ENCODE measurements at regions of chr19 and their contacts with region 1.

Region 1: DNA sequence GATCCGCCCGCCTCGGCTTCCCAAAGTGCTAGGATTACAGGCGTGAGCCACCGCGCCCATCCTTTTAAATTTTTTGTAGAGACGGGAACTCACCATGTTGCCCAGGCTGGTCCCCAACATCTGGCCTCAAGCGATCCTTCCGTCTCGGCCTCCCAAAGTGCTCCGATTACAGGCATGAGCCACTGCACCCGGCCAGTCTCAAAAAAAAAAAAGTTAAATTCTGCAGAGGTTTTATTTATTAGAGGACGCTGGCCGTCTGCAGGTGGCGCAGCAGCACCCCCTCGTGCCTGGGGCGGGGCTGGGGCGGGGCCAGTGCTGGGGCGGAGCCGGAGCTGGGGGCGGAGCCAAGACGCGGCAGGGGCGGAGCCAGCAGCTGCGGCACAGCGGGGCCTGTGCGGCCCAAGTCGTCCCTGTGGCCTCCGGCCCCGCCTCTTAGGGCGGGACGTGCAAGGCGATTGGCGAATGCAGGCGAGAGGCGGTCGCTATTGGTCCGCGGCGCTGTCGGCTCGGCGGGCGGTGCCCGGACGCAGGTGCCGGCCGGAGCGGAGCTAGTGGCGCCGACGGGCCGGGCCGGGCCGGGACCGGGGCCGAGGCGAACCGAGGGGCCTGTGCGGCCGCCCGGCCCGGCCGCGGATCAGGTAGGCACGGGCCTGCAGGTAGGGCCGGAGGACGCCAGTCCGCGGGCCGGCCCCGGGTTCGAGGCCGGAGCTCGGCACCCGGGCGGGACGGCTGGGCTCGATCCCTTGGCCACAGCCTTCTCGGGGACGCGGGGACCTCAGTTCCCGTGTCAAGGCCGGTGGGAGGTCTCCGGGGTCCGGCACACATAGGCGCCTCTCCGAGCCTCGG is at the start of gene MARCHF2:
- DNase-seq: peak; percentile 99
- H3K4me3 ChIP-seq: peak within 1 kb of the TSS; percentile 86
- H3K27ac ChIP-seq: no peak within 1 kb of the TSS
- H3K4me1 ChIP-seq: peaks cover 6% of the 10 kb centered on the region
- CTCF ChIP-seq: peak; percentile 74
- total RNA-seq, gene MARCHF2: 8.1 and 14.1 TPM in 2 replicates

Region 2: DNA sequence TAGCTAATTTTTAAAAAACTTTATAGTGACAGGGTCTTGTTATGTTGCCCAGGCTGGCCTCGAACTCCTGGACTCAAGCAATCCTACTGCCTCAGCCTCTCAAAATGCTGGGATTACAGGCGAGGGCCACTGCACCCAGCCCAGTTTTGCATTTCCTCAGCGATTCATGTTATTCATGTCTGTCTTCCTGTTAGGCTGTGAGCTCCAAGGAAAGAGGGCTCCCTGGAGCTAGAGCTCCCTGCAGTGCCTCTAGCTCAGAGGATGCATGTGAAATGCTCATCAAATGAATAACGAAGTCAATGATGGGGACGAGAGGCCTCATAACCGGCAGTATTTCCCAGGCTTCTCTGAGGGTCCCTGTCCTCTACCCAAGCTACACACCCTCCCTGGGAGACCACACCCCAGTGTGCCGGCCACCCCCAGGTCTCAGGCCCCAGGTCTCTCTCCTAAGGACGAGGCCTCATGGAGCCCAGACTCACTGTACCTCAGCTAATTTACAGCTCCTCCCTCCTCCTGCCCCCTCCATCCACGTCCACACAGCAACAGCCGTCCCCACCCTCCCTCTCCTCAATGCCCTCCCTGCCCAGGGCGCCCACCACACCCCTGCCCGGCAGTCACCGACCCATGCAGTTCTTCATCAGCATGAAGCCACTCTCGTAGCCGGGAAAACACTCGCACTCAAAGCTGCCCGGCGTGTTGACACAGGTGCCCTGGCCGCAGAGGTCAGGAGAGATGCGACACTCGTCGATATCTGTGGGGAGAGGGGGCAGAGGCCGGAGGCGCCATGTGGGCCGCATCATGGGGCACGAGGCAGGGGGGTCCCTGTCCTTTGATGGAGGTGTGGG is 292.1 kb before region 1 on chr19:
- CTCF ChIA-PET with region 1: no interaction called
- POLR2A ChIA-PET with region 1: no interaction called
- intact Hi-C with region 1: no loop called
- DNase-seq: no peak
- H3K4me3 ChIP-seq: no peak overlapping the region
- H3K27ac ChIP-seq: no peak overlapping the region
- H3K4me1 ChIP-seq: no peaks in the 10 kb centered on the region
- CTCF ChIP-seq: no peak

Region 3: DNA sequence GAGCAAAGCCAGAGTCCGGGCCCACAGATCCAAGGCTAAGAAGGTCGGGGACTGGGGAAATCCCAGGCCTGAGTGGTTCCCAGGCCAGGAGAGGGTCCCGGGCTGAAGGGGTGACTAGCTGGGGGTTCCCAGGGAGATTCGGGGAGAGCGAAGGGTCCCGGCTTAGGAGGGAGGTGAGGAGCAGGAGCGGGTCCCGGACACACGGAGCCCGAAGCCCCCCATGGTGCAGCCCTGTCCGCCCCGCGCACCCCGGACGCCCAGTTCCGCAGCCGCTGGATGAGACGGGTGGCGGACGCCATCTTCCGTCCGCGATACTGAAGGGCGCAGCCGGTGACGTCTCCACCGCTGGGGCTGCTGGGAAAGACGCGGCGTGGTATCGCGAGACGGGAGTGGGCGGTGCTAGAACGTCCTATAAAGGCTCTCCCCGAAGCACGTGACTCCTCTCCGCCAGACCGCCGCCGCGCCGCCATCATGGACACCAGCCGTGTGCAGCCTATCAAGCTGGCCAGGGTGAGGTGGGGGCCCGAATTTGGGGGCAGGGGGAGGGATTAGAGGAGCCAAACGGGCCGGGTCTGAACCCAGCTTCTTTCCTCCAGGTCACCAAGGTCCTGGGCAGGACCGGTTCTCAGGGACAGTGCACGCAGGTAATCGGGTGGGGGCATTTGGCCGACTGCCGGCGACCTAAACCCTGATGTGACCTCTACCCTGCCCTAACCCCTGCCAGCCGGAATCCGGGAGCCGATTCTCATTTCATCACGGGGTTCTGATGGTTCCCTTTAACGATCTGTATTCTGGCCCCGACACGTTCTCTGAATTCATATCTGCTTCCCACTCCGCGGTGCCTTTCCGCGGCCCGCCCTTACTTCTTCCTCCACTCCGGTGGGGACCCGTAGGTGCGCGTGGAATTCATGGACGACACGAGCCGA is 91.7 kb before region 1 on chr19 and contains the starts of genes NDUFA7 and RPS28:
- CTCF ChIA-PET with region 1: no interaction called
- POLR2A ChIA-PET with region 1: no interaction called
- intact Hi-C with region 1: no loop called
- DNase-seq: peak; percentile 98
- H3K4me3 ChIP-seq: peak within 1 kb of the TSS; percentile 100
- H3K27ac ChIP-seq: peak within 1 kb of the TSS; percentile 67
- H3K4me1 ChIP-seq: peaks cover 55% of the 10 kb centered on the region
- CTCF ChIP-seq: 0 out of 2 replicates have a peak, but pooled peaks have one; percentile 27
- total RNA-seq, gene NDUFA7: 59.2 and 93.0 TPM in 2 replicates
- total RNA-seq, gene RPS28: 1,636 and 2,574 TPM in 2 replicates

Region 4: GRCh38 chr19:8342684-8343482 is 70.1 kb before region 1 on chr19 and contains the start of gene KANK3:
- CTCF ChIA-PET with region 1: no interaction called
- POLR2A ChIA-PET with region 1: no interaction called
- intact Hi-C with region 1: no loop called
- DNase-seq: peak; percentile 93
- H3K4me3 ChIP-seq: peak within 1 kb of the TSS; percentile 42
- H3K27ac ChIP-seq: no peak within 1 kb of the TSS
- H3K4me1 ChIP-seq: peaks cover 5% of the 10 kb centered on the region
- CTCF ChIP-seq: no peak
- total RNA-seq, gene KANK3: 0.22 TPM in 1 of 2 replicates, not detected in the other

Region 5: DNA sequence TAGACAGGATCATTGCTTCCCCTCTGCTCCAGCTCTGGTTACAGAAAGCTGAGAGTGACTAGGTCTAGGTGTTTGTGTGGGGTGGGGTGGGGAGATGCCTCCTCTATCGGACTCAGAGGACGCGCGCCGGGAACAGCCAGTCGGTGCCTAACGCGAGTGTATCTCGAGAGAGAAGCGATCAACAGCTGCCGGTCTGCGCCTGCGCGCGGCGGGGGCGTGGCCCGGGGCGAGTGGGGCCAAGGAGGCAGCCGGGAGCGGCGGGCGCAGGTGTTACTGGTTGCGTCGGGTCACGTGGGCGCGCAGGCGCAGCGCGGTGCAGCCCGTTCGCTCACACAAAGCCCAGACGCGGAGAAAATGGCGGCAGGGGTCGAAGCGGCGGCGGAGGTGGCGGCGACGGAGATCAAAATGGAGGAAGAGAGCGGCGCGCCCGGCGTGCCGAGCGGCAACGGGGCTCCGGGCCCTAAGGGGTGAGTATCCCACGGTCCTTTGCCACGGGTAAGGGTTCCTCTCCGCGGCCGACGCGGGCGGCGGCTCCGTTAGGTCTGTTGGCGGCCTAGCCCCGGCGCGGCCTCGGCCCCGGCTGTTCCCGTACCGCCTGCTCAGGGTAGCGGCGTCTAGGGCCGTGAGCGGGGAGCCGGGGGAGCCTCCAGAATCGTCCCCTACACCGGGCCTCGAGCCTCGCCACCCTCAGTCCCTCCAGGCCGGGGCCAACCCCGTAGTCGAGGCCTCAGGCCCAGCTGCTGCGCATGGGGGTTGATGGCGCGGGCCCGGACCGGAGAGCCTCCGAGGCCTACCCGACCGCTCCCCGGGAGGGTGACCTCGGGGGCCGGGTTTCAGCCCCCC is 31.9 kb after region 1 on chr19 and contains the start of gene HNRNPM:
- CTCF ChIA-PET with region 1: no interaction called
- POLR2A ChIA-PET with region 1: interaction called, 16 read pairs
- intact Hi-C with region 1: loop called (anchors 1 kb)
- DNase-seq: peak; percentile 98
- H3K4me3 ChIP-seq: peak within 1 kb of the TSS; percentile 96
- H3K27ac ChIP-seq: peak within 1 kb of the TSS; percentile 83
- H3K4me1 ChIP-seq: peaks cover 40% of the 10 kb centered on the region
- CTCF ChIP-seq: no peak
- total RNA-seq, gene HNRNPM: 90.0 and 111 TPM in 2 replicates

Region 6: GRCh38 chr19:8505680-8506401 is 92.8 kb after region 1 on chr19:
- CTCF ChIA-PET with region 1: interaction called, 3 read pairs
- POLR2A ChIA-PET with region 1: interaction called, 3 read pairs
- intact Hi-C with region 1: loop called (anchors 1 kb)
- DNase-seq: peak; percentile 83
- H3K4me3 ChIP-seq: peak overlapping the region; percentile 71
- H3K27ac ChIP-seq: peak overlapping the region; percentile 47
- H3K4me1 ChIP-seq: peaks cover 13% of the 10 kb centered on the region
- CTCF ChIP-seq: peak; percentile 94

Region 7: GRCh38 chr19:8580710-8581281 is 167.8 kb after region 1 on chr19:
- CTCF ChIA-PET with region 1: no interaction called
- POLR2A ChIA-PET with region 1: interaction called, 3 read pairs
- intact Hi-C with region 1: loop called (anchors 2 kb)
- DNase-seq: peak; percentile 84
- H3K4me3 ChIP-seq: no peak overlapping the region
- H3K27ac ChIP-seq: no peak overlapping the region
- H3K4me1 ChIP-seq: peaks cover 18% of the 10 kb centered on the region
- CTCF ChIP-seq: peak; percentile 98